Right cardiac atrium (tissue), 5 donors: ENCODE measurements at regions of chr1 and their contacts with region 1.

Region 1: GRCh38 chr1:162497723-162498500 is at the start of gene UHMK1:
- DNase-seq: peak; percentile 91 to 96 (median 95)
- ATAC-seq: peak; percentile 99 to 100
- H3K4me3 ChIP-seq: peak within 1 kb of the TSS; percentile 84
- H3K27ac ChIP-seq: peak within 1 kb of the TSS; percentile 63
- H3K4me1 ChIP-seq: peaks cover 3% of the 10 kb centered on the region
- H3K27me3 ChIP-seq: no peaks in the 10 kb centered on the region
- total RNA-seq, gene UHMK1: 23.9 to 26.3 (median 25.3) TPM

Region 2: DNA sequence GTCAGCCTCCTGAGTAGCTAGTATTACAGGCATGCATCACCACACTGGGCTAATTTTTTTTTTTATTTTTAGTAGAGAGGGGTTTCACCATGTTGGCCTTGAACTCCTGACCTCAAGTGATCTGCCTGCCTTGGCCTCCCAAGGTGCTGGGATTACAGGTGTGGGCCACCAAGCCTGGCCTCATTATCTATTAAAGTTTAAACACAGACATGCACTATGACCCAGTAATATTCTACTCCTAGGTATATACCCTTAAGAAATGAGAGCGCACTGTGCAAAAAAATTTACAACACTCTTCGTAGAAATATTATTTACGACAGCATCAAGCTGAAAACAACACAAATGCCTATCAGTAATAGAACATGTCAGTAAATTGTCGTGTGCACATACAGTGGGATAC is 67.3 kb before region 1 on chr1:
- intact Hi-C with region 1: loop called in 1 of 4 experiments (anchors 10 kb)
- DNase-seq: no peak
- ATAC-seq: no peak
- H3K4me3 ChIP-seq: no peak overlapping the region
- H3K27ac ChIP-seq: no peak overlapping the region
- H3K4me1 ChIP-seq: no peaks in the 10 kb centered on the region
- H3K27me3 ChIP-seq: no peaks in the 10 kb centered on the region